Activated T-helper 1 cell treated with anti-CD3 and anti-CD28 coated beads, Interleukin-12 subunit alpha, Interleukin-12 subunit beta, Interleukin-2, Interleukin-4 antibody, amounts not matched to agents 30 ng/mL and 10 ng/mL and 1 ng/mL, durations not matched to agents 14 hours and 24 hours and 36 hours (primary cell): ENCODE measurements at regions of chr5 and their contacts with region 1.

Region 1: DNA sequence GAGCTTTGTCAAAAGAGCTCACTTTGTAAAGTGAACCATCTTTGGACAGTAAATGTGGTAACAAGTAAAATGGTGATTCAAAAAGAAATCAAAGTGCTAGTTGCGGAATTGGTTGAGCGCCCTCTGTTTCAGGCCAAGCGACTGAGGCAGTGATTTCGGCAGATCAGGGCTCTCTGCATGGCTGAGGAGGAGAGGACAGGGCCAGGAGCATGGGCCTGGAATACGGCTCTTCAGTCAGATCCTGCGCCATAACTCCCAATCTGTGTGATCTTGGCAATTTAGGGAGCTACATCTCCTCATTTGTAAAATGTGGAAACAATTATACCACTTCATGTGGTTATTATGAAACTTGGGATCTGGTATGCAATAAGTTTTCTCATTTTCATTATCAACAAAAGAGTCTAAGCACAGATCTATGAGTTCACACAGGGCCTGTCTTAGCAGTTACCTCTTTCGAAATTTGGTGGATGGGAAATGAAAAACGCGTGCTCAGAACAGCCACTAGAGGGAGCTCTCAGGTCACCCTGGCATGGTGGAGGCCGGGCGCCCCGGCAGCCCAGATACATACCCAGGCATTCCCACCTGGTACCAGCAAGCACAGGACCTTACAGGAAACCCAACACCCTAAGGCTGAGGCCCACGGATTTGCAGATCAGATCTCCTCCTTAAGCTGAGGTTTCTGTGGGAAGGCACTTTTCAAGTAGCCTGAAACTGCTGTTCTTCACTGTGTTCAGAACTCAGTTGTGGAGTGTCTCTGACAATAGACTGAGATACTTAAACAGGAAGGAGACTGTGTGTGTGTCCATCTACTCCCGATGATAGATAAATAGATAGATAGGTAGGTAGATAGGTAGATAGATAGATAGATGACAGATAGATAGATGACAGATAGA is 303.7 kb downstream of the RAB3C start:
- DNase-seq: peak; percentile 58
- H3K4me3 Mint-ChIP-seq: peak overlapping the region; percentile 49
- H3K27ac Mint-ChIP-seq: peak overlapping the region; percentile 87
- H3K4me1 Mint-ChIP-seq: peaks cover 40% of the 10 kb centered on the region
- H3K27me3 Mint-ChIP-seq: peaks cover 9% of the 10 kb centered on the region

Region 2: GRCh38 chr5:58545912-58546311 is 340.6 kb before region 1 on chr5:
- intact Hi-C with region 1: no loop called
- DNase-seq: no peak
- H3K4me3 Mint-ChIP-seq: no peak overlapping the region
- H3K27ac Mint-ChIP-seq: no peak overlapping the region
- H3K4me1 Mint-ChIP-seq: no peaks in the 10 kb centered on the region
- H3K27me3 Mint-ChIP-seq: no peaks in the 10 kb centered on the region

Region 3: GRCh38 chr5:58746321-58746720 is 140.2 kb before region 1 on chr5:
- intact Hi-C with region 1: no loop called
- DNase-seq: no peak
- H3K4me3 Mint-ChIP-seq: no peak overlapping the region
- H3K27ac Mint-ChIP-seq: no peak overlapping the region
- H3K4me1 Mint-ChIP-seq: no peaks in the 10 kb centered on the region
- H3K27me3 Mint-ChIP-seq: peaks cover 6% of the 10 kb centered on the region

Region 4: GRCh38 chr5:59007460-59008063 is 121.0 kb after region 1 on chr5:
- intact Hi-C with region 1: loop called (anchors 1 kb)
- DNase-seq: no peak
- H3K4me3 Mint-ChIP-seq: no peak overlapping the region
- H3K27ac Mint-ChIP-seq: no peak overlapping the region
- H3K4me1 Mint-ChIP-seq: peaks cover 90% of the 10 kb centered on the region
- H3K27me3 Mint-ChIP-seq: no peaks in the 10 kb centered on the region

Region 5: GRCh38 chr5:59099270-59099994 is 212.9 kb after region 1 on chr5:
- intact Hi-C with region 1: loop called (anchors 2 kb)
- DNase-seq: peak; percentile 69
- H3K4me3 Mint-ChIP-seq: peak overlapping the region; percentile 50
- H3K27ac Mint-ChIP-seq: peak overlapping the region; percentile 90
- H3K4me1 Mint-ChIP-seq: peaks cover 82% of the 10 kb centered on the region
- H3K27me3 Mint-ChIP-seq: no peaks in the 10 kb centered on the region

Region 6: DNA sequence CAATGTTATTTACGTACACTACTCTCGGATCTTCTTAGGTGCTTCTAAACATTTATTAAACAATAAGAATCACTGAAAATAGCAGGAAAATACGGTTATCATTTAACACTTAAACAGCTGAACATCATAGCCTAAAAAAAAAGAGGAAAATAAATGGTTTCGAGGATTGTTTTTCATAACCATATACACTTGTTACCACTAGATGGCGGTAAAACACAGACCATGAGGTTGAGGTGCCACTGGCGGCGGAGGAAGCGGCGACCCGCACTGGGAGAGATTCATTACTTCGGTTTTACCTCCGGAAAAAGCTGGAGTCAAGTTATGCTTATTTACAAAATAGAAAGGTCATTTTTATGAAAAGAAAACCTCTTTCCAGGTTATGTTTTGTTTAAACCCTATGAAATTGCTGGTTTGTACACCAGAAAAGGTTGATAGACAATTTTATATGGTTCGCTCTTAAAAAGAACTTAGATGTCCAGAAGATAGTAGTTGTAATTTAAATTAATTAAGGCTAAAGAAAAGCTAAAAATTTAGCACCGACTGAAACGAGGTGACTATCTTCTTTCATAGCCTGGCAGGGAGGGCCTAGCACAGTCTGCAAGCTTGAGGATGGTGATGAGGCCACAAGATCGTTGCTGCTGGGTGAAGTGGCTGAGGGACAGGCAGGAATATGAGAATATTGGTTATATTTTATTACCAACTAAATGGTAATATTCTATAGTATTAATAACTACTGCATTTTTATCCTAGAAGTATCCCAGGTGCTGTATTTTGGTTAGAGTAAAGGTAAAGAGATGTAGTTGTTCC is 302.1 kb after region 1 on chr5:
- intact Hi-C with region 1: loop called (anchors 1 kb)
- DNase-seq: peak; percentile 32
- H3K4me3 Mint-ChIP-seq: no peak overlapping the region
- H3K27ac Mint-ChIP-seq: no peak overlapping the region
- H3K4me1 Mint-ChIP-seq: peaks cover 7% of the 10 kb centered on the region
- H3K27me3 Mint-ChIP-seq: peaks cover 27% of the 10 kb centered on the region

Region 7: DNA sequence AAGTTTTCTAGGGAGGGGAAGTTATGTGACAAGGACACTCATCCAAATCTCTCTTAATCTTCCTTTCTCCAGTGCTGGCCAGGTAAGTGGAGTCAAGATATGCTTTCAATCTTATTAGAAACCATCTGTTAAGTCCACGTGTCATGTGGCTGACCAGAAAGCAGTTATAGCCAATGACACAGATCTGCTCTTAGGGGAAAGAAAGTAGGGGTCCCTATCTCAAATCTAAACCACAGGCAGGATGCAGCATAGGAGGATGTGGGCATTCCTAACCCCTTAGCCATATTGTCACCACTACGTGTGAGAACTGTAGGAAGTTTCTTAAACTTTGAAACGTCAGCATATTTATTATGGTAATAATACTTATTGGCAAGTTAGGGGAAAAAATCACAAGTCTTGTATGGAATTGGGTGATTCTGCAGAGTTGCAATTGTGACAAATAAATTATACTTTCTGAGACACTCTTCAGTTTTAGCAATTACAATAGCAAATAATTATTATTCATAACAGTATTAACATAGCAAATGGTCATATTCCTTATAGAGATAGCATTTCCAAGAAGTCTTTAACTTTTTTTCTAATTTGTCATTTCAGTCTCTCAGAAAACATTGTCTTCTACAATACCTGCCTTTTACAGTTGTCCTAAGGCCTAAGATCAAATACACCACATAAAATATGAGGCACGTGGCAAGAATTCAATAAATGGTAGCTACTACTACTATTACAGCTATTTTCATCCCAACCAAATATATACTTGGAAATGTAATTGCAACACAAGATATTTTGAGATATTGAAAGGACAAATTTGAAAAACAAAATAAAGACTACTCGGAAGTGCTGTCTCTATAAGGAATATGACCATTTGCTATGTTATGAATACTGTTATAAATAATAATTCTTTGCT is 770.0 kb after region 1 on chr5:
- intact Hi-C with region 1: loop called (anchors 10 kb)
- DNase-seq: no peak
- H3K4me3 Mint-ChIP-seq: no peak overlapping the region
- H3K27ac Mint-ChIP-seq: no peak overlapping the region
- H3K4me1 Mint-ChIP-seq: peaks cover 32% of the 10 kb centered on the region
- H3K27me3 Mint-ChIP-seq: peaks cover 2% of the 10 kb centered on the region